ENCODE measurements at regions of chrX and their contacts with region 1.

Region 1: GRCh38 chrX:132219343-132219768 is at the start of gene RAP2C:
- DNase-seq: peak; percentile 38 to 67 (median 53)
- H3K4me3 ChIP-seq: peak within 1 kb of the TSS; percentile 36 to 68
- H3K4me3 Mint-ChIP-seq: peak within 1 kb of the TSS; percentile 73 to 96 (median 86)
- H3K27ac ChIP-seq: peak within 1 kb of the TSS; percentile 94
- H3K27ac Mint-ChIP-seq: peak within 1 kb of the TSS; percentile 89 to 99 (median 94)
- H3K4me1 ChIP-seq: peaks cover 31% of the 10 kb centered on the region
- H3K4me1 Mint-ChIP-seq: peaks cover 17 to 41% (median 21%) of the 10 kb centered on the region in 4 donors
- H3K27me3 ChIP-seq: no peaks in the 10 kb centered on the region
- H3K27me3 Mint-ChIP-seq: no peaks in the 10 kb centered on the region
- total RNA-seq, gene RAP2C: 28.2 to 30.8 TPM

Region 2: GRCh38 chrX:130268500-130269170 is 1950.7 kb before region 1 on chrX and contains the start of gene ZNF280C:
- CTCF ChIA-PET with region 1: no interaction called
- POLR2A ChIA-PET with region 1: no interaction called
- intact Hi-C with region 1: loop called (anchors 10 kb)
- DNase-seq: peak; percentile 85 to 93 (median 90)
- H3K4me3 ChIP-seq: peak within 1 kb of the TSS; percentile 57 to 76
- H3K4me3 Mint-ChIP-seq: peak within 1 kb of the TSS; percentile 87 to 92 (median 89)
- H3K27ac ChIP-seq: peak within 1 kb of the TSS; percentile 67
- H3K27ac Mint-ChIP-seq: peak within 1 kb of the TSS; percentile 82 to 94 (median 88)
- H3K4me1 ChIP-seq: peaks cover 24% of the 10 kb centered on the region
- H3K4me1 Mint-ChIP-seq: peaks cover 5 to 20% (median 7%) of the 10 kb centered on the region in 4 donors
- H3K27me3 ChIP-seq: no peaks in the 10 kb centered on the region
- H3K27me3 Mint-ChIP-seq: no peaks in the 10 kb centered on the region
- total RNA-seq, gene ZNF280C: 4.0 to 4.9 TPM

Region 3: GRCh38 chrX:131841496-131842410 is 377.6 kb before region 1 on chrX:
- CTCF ChIA-PET with region 1: interaction called, 21 read pairs
- POLR2A ChIA-PET with region 1: interaction called, 3 read pairs
- intact Hi-C with region 1: loop called (anchors 1 kb)
- DNase-seq: peak in 4 of 5 donors; percentile 50 to 65 (median 52)
- H3K4me3 ChIP-seq: no peak overlapping the region
- H3K4me3 Mint-ChIP-seq: peak overlapping the region in 1 of 8 donors; percentile 16
- H3K27ac ChIP-seq: no peak overlapping the region
- H3K27ac Mint-ChIP-seq: peak overlapping the region in 1 of 7 donors; percentile 12
- H3K4me1 ChIP-seq: no peaks in the 10 kb centered on the region
- H3K4me1 Mint-ChIP-seq: peaks cover 0 to 8% (median 5%) of the 10 kb centered on the region in 4 donors
- H3K27me3 ChIP-seq: no peaks in the 10 kb centered on the region
- H3K27me3 Mint-ChIP-seq: no peaks in the 10 kb centered on the region

Region 4: DNA sequence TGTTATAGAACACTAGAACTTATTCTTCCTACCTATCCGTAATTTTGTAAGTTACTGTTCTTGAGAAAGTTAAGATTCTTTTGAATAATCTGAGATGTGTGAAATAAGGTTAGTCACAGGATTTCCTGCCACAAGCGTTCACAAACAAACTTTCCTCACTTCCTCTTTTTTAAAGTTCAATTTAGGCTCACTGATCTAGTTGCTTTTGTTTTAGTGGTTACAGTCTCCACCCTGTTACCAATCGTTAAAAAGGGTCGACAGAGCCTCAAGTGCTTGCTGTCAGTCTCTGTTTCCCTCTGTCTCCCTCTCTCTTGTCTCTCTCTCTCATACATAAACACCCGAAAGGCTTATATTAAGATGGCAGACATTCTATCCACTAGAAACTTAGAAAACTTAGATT is 232.1 kb before region 1 on chrX:
- CTCF ChIA-PET with region 1: interaction called, 5 read pairs
- POLR2A ChIA-PET with region 1: no interaction called
- intact Hi-C with region 1: loop called (anchors 1 kb)
- DNase-seq: peak; percentile 45 to 71 (median 64)
- H3K4me3 ChIP-seq: no peak overlapping the region
- H3K4me3 Mint-ChIP-seq: peak overlapping the region; percentile 72 to 89 (median 79)
- H3K27ac ChIP-seq: peak overlapping the region; percentile 47
- H3K27ac Mint-ChIP-seq: peak overlapping the region; percentile 90 to 99 (median 91)
- H3K4me1 ChIP-seq: peaks cover 50% of the 10 kb centered on the region
- H3K4me1 Mint-ChIP-seq: peaks cover 36 to 73% (median 45%) of the 10 kb centered on the region in 4 donors
- H3K27me3 ChIP-seq: no peaks in the 10 kb centered on the region
- H3K27me3 Mint-ChIP-seq: no peaks in the 10 kb centered on the region

Region 5: GRCh38 chrX:132092439-132093065 is 126.8 kb before region 1 on chrX:
- CTCF ChIA-PET with region 1: interaction called, 62 read pairs
- POLR2A ChIA-PET with region 1: interaction called, 7 read pairs
- intact Hi-C with region 1: loop called (anchors 1 kb)
- DNase-seq: peak; percentile 39 to 50 (median 42)
- H3K4me3 ChIP-seq: no peak overlapping the region
- H3K4me3 Mint-ChIP-seq: peak overlapping the region in 1 of 8 donors; percentile 11
- H3K27ac ChIP-seq: no peak overlapping the region
- H3K27ac Mint-ChIP-seq: peak overlapping the region in 1 of 7 donors; percentile 41
- H3K4me1 ChIP-seq: no peaks in the 10 kb centered on the region
- H3K4me1 Mint-ChIP-seq: peaks cover 0 to 5% (median 2%) of the 10 kb centered on the region in 4 donors
- H3K27me3 ChIP-seq: no peaks in the 10 kb centered on the region
- H3K27me3 Mint-ChIP-seq: peaks cover 3% of the 10 kb centered on the region in 2 donors

Region 6: GRCh38 chrX:132488819-132489577 is 269.6 kb after region 1 on chrX and contains the start of gene MBNL3:
- CTCF ChIA-PET with region 1: interaction called, 6 read pairs
- POLR2A ChIA-PET with region 1: interaction called, 5 read pairs
- intact Hi-C with region 1: loop called (anchors 2 kb)
- DNase-seq: peak; percentile 61 to 84 (median 73)
- H3K4me3 ChIP-seq: peak within 1 kb of the TSS in 1 of 2 donors; percentile 68
- H3K4me3 Mint-ChIP-seq: peak within 1 kb of the TSS; percentile 94 to 97 (median 96)
- H3K27ac ChIP-seq: peak within 1 kb of the TSS; percentile 71
- H3K27ac Mint-ChIP-seq: peak within 1 kb of the TSS; percentile 93 to 98 (median 95)
- H3K4me1 ChIP-seq: peaks cover 39% of the 10 kb centered on the region
- H3K4me1 Mint-ChIP-seq: peaks cover 28 to 55% (median 45%) of the 10 kb centered on the region in 4 donors
- H3K27me3 ChIP-seq: no peaks in the 10 kb centered on the region
- H3K27me3 Mint-ChIP-seq: no peaks in the 10 kb centered on the region
- total RNA-seq, gene MBNL3: 36.6 to 39.6 TPM

Measured in CD4-positive, alpha-beta memory T cell (primary cell).